ENCODE measurements at regions of chr22 and their contacts with region 1.

Region 1: DNA sequence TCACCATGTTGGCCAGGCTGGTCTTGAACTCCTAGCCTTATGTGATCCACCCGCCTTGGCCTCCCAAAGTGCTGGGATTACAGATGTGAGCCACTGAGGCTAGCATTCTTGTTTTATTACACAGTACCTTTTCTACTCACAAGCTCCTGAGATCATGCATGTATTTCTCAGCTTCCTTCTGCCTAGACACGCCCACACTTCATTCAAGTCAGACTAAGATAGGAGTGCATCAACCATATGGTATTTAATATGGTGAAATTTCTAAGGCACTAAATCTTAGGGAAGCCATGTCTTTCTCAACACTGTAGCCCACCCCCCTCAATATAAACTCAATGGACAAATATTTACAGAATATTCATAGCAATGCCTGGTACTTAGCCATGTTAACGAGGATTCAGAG is 62.1 kb downstream of the SLC25A17 start:
- DNase-seq: no peak
- ATAC-seq: no peak
- H3K4me3 ChIP-seq: no peak overlapping the region
- H3K27ac ChIP-seq: no peak overlapping the region
- H3K4me1 ChIP-seq: no peaks in the 10 kb centered on the region
- CTCF ChIP-seq: no peak
- EP300 ChIP-seq: no peak
- POLR2A ChIP-seq: no peak
- RAD21 ChIP-seq: no peak

Region 2: GRCh38 chr22:40714192-40714951 is 42.7 kb before region 1 on chr22:
- CTCF ChIA-PET with region 1: interaction called, 13 read pairs
- POLR2A ChIA-PET with region 1: interaction called, 3 read pairs
- DNase-seq: peak in 1 of 2 experiments; percentile 78
- ATAC-seq: peak; percentile 49 to 52; a peak in 5 of 6 replicates
- H3K4me3 ChIP-seq: no peak overlapping the region
- H3K27ac ChIP-seq: peak overlapping the region; percentile 23 to 64
- H3K4me1 ChIP-seq: peaks cover 50% of the 10 kb centered on the region
- CTCF ChIP-seq: no peak
- EP300 ChIP-seq: no peak
- POLR2A ChIP-seq: no peak
- RAD21 ChIP-seq: no peak

Region 3: DNA sequence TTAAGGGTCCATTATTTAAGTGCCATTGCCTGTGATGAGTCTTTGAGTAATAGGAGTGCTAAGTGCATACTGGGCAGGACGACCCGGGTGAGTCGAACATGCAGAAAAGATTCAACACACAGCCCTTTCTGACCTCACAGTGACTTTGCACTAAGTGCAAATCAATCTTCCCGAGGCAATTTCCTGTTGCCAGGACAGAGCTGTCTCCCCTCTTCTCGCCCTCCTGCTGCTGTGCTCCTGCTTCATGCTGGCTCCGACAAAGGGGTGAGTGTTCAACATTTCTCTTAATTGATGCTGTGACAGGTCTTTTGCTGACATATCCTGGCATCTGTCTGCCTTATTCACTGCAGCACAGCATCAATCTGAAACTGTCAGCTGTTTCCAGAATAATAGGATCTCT is 35.8 kb before region 1 on chr22:
- CTCF ChIA-PET with region 1: interaction called, 12 read pairs
- POLR2A ChIA-PET with region 1: no interaction called
- DNase-seq: peak in 1 of 2 experiments; percentile 69
- ATAC-seq: peak; percentile 62 to 89; a peak in 5 of 6 replicates
- H3K4me3 ChIP-seq: no peak overlapping the region
- H3K27ac ChIP-seq: peak overlapping the region in 1 of 2 experiments; percentile 52; a peak in 3 of 6 replicates
- H3K4me1 ChIP-seq: peaks cover 9% of the 10 kb centered on the region; the same call in 2 of the 3 replicates
- CTCF ChIP-seq: no peak
- EP300 ChIP-seq: no peak
- POLR2A ChIP-seq: no peak
- RAD21 ChIP-seq: no peak

Region 4: GRCh38 chr22:40746428-40747220 is 10.4 kb before region 1 on chr22:
- CTCF ChIA-PET with region 1: interaction called, 12 read pairs
- POLR2A ChIA-PET with region 1: interaction called, 5 read pairs
- DNase-seq: no peak
- ATAC-seq: peak; percentile 80 to 84; a peak in 4 of 6 replicates
- H3K4me3 ChIP-seq: peak overlapping the region; percentile 26; the same call in 2 of the 3 replicates
- H3K27ac ChIP-seq: peak overlapping the region; percentile 31 to 71; a peak in 4 of 6 replicates
- H3K4me1 ChIP-seq: peaks cover 10% of the 10 kb centered on the region
- CTCF ChIP-seq: no peak
- EP300 ChIP-seq: no peak
- POLR2A ChIP-seq: no peak
- RAD21 ChIP-seq: no peak

Region 5: DNA sequence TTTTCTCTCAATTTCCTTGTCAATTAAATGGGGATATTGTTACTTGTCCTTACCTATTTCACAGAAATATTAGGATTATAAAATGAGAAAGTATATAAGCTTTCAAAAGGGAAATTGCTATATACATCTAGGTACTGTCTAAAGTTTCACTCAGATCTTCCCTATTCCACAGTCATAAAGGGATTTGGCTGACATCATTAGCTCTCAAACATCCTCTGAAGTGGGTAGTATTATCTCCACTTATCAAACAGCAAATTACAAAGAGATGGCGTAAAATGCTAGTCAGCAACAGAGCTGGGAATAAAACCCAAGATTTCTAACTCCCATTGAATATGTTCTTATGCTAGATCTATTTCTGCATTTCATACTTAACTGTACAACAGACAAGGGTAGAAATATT is 11.1 kb after region 1 on chr22:
- CTCF ChIA-PET with region 1: interaction called, 12 read pairs
- POLR2A ChIA-PET with region 1: no interaction called
- DNase-seq: no peak
- ATAC-seq: no peak
- H3K4me3 ChIP-seq: no peak overlapping the region
- H3K27ac ChIP-seq: no peak overlapping the region
- H3K4me1 ChIP-seq: no peaks in the 10 kb centered on the region
- CTCF ChIP-seq: no peak
- EP300 ChIP-seq: no peak
- POLR2A ChIP-seq: no peak
- RAD21 ChIP-seq: no peak